ENCODE measurements at regions of chr6 and their contacts with region 1.

Region 1: GRCh38 chr6:160221423-160221822 is 37.2 kb downstream of the SLC22A2 start:
- DNase-seq: peak; percentile 41
- H3K4me3 ChIP-seq: no peak overlapping the region
- H3K27ac ChIP-seq: no peak overlapping the region
- H3K4me1 ChIP-seq: no peaks in the 10 kb centered on the region
- H3K27me3 ChIP-seq: no peaks in the 10 kb centered on the region
- CTCF ChIP-seq: peak; percentile 28 to 61

Region 2: GRCh38 chr6:160088069-160088783 is 133.2 kb before region 1 on chr6:
- CTCF ChIA-PET with region 1: no interaction called
- dilution Hi-C with region 1: no loop called
- in situ Hi-C with region 1: no loop called
- intact Hi-C with region 1: loop called (anchors 5 kb)
- DNase-seq: peak; percentile 43
- H3K4me3 ChIP-seq: no peak overlapping the region
- H3K27ac ChIP-seq: no peak overlapping the region
- H3K4me1 ChIP-seq: no peaks in the 10 kb centered on the region
- H3K27me3 ChIP-seq: no peaks in the 10 kb centered on the region
- CTCF ChIP-seq: peak; percentile 74 to 81

Region 3: DNA sequence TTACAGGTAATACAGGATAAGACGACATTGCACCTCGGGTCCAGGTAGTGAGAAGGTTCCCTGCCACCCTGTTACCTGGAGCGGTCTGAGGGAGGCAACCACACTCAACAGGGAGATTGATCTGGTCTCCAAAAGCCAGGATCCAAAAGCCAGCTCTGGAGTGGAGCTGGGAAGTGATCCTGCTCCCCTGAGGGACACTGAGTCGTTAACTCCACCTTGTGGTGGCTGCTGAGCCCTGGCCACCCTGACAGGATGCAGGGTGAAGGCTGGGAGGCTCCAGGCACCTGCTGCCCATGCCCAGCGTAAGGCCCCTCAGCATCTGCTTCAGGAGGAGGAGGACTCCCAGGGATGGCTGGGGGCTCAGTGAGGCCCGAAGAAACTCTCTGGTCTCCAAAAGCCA is 75.9 kb after region 1 on chr6:
- CTCF ChIA-PET with region 1: interaction called, 4 read pairs
- dilution Hi-C with region 1: no loop called
- in situ Hi-C with region 1: no loop called
- intact Hi-C with region 1: loop called (anchors 1 kb)
- DNase-seq: no peak
- H3K4me3 ChIP-seq: no peak overlapping the region
- H3K27ac ChIP-seq: no peak overlapping the region
- H3K4me1 ChIP-seq: peaks cover 10% of the 10 kb centered on the region
- H3K27me3 ChIP-seq: no peaks in the 10 kb centered on the region
- CTCF ChIP-seq: peak in 1 of 2 donors; percentile 19

Region 4: GRCh38 chr6:160363016-160363996 is 141.9 kb after region 1 on chr6:
- CTCF ChIA-PET with region 1: no interaction called
- dilution Hi-C with region 1: no loop called
- in situ Hi-C with region 1: no loop called
- intact Hi-C with region 1: no loop called
- DNase-seq: no peak
- H3K4me3 ChIP-seq: no peak overlapping the region
- H3K27ac ChIP-seq: no peak overlapping the region
- H3K4me1 ChIP-seq: peaks cover 12% of the 10 kb centered on the region
- H3K27me3 ChIP-seq: no peaks in the 10 kb centered on the region
- CTCF ChIP-seq: no peak

Region 5: DNA sequence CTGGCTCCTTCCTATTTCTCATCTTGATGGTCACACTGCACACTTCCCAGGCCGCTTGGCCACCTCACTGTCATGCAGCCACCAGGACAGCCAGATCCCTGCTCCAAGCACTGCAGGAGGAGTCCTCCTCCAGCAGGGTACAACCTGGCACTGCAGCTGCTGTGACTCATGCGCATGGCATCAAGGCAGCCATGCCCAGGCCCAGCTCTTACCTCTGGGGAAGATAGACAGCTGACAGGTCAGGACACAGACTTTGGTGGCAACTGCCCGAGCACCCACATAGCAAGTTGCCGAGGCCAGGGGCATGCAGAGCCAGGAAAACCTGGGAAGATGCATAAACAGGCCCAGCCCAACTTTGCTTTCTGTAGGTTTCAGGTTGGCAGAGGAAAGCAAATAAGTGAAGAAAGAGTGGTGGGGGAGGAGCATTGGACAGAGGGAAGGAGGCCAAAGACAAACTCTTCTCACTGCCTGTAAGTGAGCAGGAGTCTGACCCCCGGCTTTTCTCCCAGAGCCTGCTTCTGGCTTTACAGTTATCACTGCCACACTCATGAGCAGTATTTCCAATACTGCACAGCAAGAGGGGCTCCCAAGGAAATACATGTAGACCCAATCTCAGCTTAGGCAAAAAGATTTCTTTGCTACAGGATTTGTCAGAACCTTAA is 165.6 kb after region 1 on chr6:
- CTCF ChIA-PET with region 1: no interaction called
- dilution Hi-C with region 1: no loop called
- in situ Hi-C with region 1: no loop called
- intact Hi-C with region 1: loop called (anchors 5 kb)
- DNase-seq: peak; percentile 83
- H3K4me3 ChIP-seq: no peak overlapping the region
- H3K27ac ChIP-seq: peak overlapping the region; percentile 36
- H3K4me1 ChIP-seq: peaks cover 50% of the 10 kb centered on the region
- H3K27me3 ChIP-seq: no peaks in the 10 kb centered on the region
- CTCF ChIP-seq: peak; percentile 23 to 61

Region 6: DNA sequence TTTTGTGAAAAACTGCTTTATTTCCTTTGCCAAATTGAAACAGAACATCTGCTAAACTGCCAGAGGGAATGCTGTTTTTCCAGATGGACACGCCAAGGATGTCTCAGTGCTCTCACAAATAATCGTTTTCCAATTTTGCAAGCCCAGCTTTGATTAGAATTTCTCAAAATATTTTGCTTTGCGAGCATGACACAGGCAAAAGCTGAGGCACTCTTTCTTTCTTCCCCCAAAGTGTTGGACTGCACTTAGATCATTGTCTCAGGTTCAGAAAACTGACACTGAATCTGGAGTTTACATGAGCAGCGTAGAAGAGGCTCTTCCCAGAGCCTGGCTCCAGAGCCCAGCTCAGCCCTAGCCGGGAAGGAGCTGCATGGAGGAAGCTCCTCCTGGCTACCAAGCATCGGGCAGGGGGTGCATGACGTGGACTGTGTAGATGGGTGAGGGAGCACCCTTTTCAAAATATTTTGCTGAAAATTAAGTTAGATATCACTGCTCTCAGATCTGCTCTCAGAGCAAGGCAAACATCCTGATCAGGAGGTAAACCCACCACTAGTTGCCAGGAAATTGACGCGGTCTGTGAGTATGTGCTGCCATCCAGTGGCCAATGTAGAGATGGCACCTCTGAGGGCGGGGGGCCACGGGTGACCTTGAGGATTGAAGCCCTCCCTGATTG is 234.3 kb after region 1 on chr6:
- CTCF ChIA-PET with region 1: interaction called, 47 read pairs
- dilution Hi-C with region 1: no loop called
- in situ Hi-C with region 1: loop called in 1 of 2 experiments (anchors 5 kb)
- intact Hi-C with region 1: loop called (anchors 1 kb)
- DNase-seq: peak; percentile 28
- H3K4me3 ChIP-seq: peak overlapping the region in 1 of 3 experiments; percentile 20
- H3K27ac ChIP-seq: no peak overlapping the region
- H3K4me1 ChIP-seq: peaks cover 4% of the 10 kb centered on the region
- H3K27me3 ChIP-seq: no peaks in the 10 kb centered on the region
- CTCF ChIP-seq: peak; percentile 83 to 95

Region 7: GRCh38 chr6:160667639-160668481 is 446.4 kb after region 1 on chr6:
- CTCF ChIA-PET with region 1: no interaction called
- dilution Hi-C with region 1: no loop called
- in situ Hi-C with region 1: no loop called
- intact Hi-C with region 1: loop called (anchors 1 kb)
- DNase-seq: peak; percentile 12
- H3K4me3 ChIP-seq: no peak overlapping the region
- H3K27ac ChIP-seq: no peak overlapping the region
- H3K4me1 ChIP-seq: no peaks in the 10 kb centered on the region
- H3K27me3 ChIP-seq: no peaks in the 10 kb centered on the region
- CTCF ChIP-seq: peak; percentile 77

Measured in mammary epithelial cell (primary cell).